CD4-positive, alpha-beta T cell (primary cell): ENCODE measurements at regions of chr17 and their contacts with region 1.

Region 1: GRCh38 chr17:40841246-40841645 is 18.8 kb upstream of the KRT10 start:
- DNase-seq: no peak
- ATAC-seq: no peak
- H3K4me3 ChIP-seq: no peak overlapping the region
- H3K4me3 Mint-ChIP-seq: no peak overlapping the region
- H3K27ac ChIP-seq: no peak overlapping the region
- H3K27ac Mint-ChIP-seq: no peak overlapping the region
- H3K4me1 ChIP-seq: no peaks in the 10 kb centered on the region
- H3K4me1 Mint-ChIP-seq: no peaks in the 10 kb centered on the region
- H3K27me3 ChIP-seq: peaks cover 0 to 6% of the 10 kb centered on the region in 2 experiments
- H3K27me3 Mint-ChIP-seq: peaks cover 41% of the 10 kb centered on the region
- CTCF ChIP-seq: no peak

Region 2: DNA sequence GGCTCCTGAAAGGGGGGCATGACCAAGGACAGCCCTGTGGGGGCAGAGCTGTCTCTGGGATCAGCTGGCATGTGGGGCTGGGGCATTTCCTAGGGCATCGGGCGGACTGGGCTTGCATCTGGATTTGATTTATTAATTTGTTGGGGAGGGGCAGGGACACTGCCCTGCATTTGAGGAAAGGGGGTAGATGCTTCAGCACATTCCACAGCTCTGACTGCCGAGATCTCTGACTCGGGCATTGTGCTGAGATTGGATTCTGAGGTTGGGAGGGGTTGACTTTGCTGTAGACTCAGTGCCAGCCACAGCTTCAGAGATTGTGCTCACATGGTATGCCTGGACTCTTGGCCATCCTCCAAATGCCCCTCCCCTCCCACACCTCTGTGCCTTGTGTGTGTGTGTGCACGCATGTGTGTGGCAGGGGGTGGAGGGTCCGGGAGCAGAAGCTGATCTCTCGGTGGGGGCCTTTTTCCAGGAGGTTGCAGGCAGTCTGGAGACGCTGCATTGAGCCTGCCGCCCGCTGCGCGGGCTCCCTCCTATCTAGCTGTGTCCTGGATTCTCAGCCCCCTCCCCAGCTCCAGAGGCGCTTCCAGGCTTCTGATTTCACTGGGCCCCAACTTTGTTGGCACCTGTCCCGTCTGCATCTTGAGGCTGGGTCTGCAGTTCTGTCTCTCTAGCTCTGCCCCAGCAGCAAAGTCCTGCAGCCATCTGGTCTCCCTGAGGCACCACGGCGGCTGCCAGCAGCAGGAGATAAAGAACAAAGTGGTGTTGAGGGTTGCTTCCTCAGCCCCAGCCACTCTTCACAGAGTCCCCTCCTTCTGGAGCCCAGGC is 383.1 kb before region 1 on chr17:
- CTCF ChIA-PET with region 1: no interaction called
- POLR2A ChIA-PET with region 1: no interaction called
- intact Hi-C with region 1: no loop called
- DNase-seq: no peak
- ATAC-seq: no peak
- H3K4me3 ChIP-seq: no peak overlapping the region
- H3K4me3 Mint-ChIP-seq: no peak overlapping the region
- H3K27ac ChIP-seq: no peak overlapping the region
- H3K27ac Mint-ChIP-seq: no peak overlapping the region
- H3K4me1 ChIP-seq: no peaks in the 10 kb centered on the region
- H3K4me1 Mint-ChIP-seq: no peaks in the 10 kb centered on the region
- H3K27me3 ChIP-seq: no peaks in the 10 kb centered on the region
- H3K27me3 Mint-ChIP-seq: no peaks in the 10 kb centered on the region
- CTCF ChIP-seq: no peak

Region 3: GRCh38 chr17:40791787-40792436 is 49.3 kb before region 1 on chr17:
- CTCF ChIA-PET with region 1: no interaction called
- POLR2A ChIA-PET with region 1: no interaction called
- intact Hi-C with region 1: loop called in 1 of 2 experiments (anchors 5 kb)
- DNase-seq: peak in 1 of 14 experiments; percentile 17
- ATAC-seq: no peak
- H3K4me3 ChIP-seq: no peak overlapping the region
- H3K4me3 Mint-ChIP-seq: no peak overlapping the region
- H3K27ac ChIP-seq: no peak overlapping the region
- H3K27ac Mint-ChIP-seq: no peak overlapping the region
- H3K4me1 ChIP-seq: no peaks in the 10 kb centered on the region
- H3K4me1 Mint-ChIP-seq: no peaks in the 10 kb centered on the region
- H3K27me3 ChIP-seq: peaks cover 9 to 17% of the 10 kb centered on the region in 2 experiments
- H3K27me3 Mint-ChIP-seq: peaks cover 39% of the 10 kb centered on the region
- CTCF ChIP-seq: no peak

Region 4: GRCh38 chr17:40909351-40909750 is 68.1 kb after region 1 on chr17:
- CTCF ChIA-PET with region 1: no interaction called
- POLR2A ChIA-PET with region 1: no interaction called
- intact Hi-C with region 1: no loop called
- DNase-seq: peak; percentile 38 to 85 (median 58)
- ATAC-seq: peak; percentile 91
- H3K4me3 ChIP-seq: no peak overlapping the region
- H3K4me3 Mint-ChIP-seq: no peak overlapping the region
- H3K27ac ChIP-seq: no peak overlapping the region
- H3K27ac Mint-ChIP-seq: no peak overlapping the region
- H3K4me1 ChIP-seq: no peaks in the 10 kb centered on the region
- H3K4me1 Mint-ChIP-seq: no peaks in the 10 kb centered on the region
- H3K27me3 ChIP-seq: peaks cover 2 to 25% of the 10 kb centered on the region in 2 experiments
- H3K27me3 Mint-ChIP-seq: peaks cover 59% of the 10 kb centered on the region
- CTCF ChIP-seq: peak; percentile 82